Posterior cingulate gyrus (tissue), 11 donors: ENCODE measurements at regions of chr18 and their contacts with region 1.

Region 1: GRCh38 chr18:61893971-61894750 is 1.4 kb upstream of the RNF152 start:
- DNase-seq: peak; percentile 51 to 95 (median 71)

Region 2: GRCh38 chr18:61322265-61322873 is 571.8 kb before region 1 on chr18:
- intact Hi-C with region 1: loop called (anchors 10 kb)
- DNase-seq: peak; percentile 37 to 96 (median 83)

Region 3: GRCh38 chr18:61581578-61582201 is 312.5 kb before region 1 on chr18:
- intact Hi-C with region 1: loop called (anchors 2 kb)
- DNase-seq: peak; percentile 35 to 95 (median 78)

Region 4: DNA sequence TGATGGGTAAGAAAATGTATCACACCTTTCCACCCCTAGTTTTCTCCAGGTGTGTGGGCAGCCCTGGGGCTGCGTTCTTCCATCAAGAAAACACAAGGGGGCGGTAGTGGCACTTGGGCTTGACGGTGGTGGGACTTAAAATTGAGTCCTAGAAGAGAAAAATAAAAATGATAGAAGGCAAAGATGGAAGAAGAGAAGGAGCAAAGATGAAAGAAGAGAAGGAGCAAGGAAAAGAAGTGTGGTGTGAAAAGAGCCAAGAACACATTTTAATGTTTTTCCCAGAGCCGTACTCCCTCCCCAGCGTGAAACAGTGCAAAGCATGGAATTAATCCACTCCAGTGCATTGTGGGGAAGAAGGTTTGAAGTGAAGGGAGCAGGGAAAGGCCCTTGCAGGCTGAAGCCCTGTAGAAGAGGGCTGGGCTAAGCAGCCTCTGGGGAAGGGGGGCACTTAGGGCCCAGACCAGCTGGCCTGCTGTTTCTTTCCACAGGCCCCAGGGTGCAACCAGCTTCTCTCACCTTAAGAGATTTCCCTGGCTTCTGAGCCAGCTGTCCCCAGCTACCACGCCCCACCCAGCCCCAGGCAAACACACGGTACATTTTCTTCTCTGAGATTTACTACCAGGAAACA is 258.1 kb before region 1 on chr18:
- intact Hi-C with region 1: loop called (anchors 2 kb)
- DNase-seq: peak in 6 of 10 donors; percentile 22 to 88 (median 51)